Left ventricle myocardium inferior (tissue), 1 donor: ENCODE measurements at regions of chr7 and their contacts with region 1.

Region 1: GRCh38 chr7:128425850-128426249 is 16.1 kb upstream of the IMPDH1 start:
- DNase-seq: peak; percentile 60
- H3K4me3 ChIP-seq: no peak overlapping the region
- H3K27ac ChIP-seq: no peak overlapping the region
- H3K4me1 ChIP-seq: peaks cover 16% of the 10 kb centered on the region
- H3K27me3 ChIP-seq: no peaks in the 10 kb centered on the region
- CTCF ChIP-seq: peak; percentile 95

Region 2: DNA sequence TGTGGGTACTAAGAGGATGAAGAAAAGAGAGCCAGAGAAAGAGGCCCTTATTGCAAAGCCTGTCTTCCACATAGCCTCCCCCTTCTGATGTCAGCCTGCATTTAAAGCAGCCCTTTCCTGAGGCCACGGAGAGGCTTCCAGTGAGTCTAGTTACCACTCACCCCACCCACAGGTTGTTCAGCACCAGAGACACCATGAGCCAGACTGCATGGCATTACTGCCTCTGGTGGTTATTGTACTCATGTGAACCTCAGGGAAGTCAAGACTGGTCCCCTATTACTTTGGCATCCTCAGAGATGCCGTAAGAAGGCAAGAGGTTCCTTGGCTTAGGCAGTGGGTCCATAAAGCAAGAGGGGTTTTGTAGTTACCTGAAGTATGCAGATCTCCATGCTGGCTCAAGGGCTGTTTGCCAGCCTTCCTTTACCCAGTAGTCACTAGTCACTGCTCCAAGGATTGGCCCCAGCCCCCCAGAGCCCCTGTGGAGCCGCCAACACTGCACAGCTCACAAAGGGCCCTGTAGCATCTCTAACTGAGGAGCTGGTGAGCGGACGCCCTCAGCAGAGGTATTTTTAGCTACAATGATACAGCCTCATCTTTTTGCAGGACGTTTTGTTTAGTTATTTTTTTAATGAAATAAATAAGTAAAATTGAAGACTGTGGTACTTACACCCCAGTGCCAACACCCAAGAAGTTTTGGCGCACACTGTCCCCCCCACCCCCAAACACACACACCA is 415.3 kb before region 1 on chr7:
- intact Hi-C with region 1: no loop called
- DNase-seq: no peak
- H3K4me3 ChIP-seq: no peak overlapping the region
- H3K27ac ChIP-seq: peak overlapping the region; percentile 79
- H3K4me1 ChIP-seq: peaks cover 69% of the 10 kb centered on the region
- H3K27me3 ChIP-seq: no peaks in the 10 kb centered on the region
- CTCF ChIP-seq: no peak

Region 3: GRCh38 chr7:128462460-128462859 is 36.6 kb after region 1 on chr7:
- intact Hi-C with region 1: loop called (anchors 5 kb)
- DNase-seq: no peak
- H3K4me3 ChIP-seq: no peak overlapping the region
- H3K27ac ChIP-seq: no peak overlapping the region
- H3K4me1 ChIP-seq: peaks cover 26% of the 10 kb centered on the region
- H3K27me3 ChIP-seq: no peaks in the 10 kb centered on the region
- CTCF ChIP-seq: no peak